Calu3 (cell line): ENCODE measurements at regions of chr2 and their contacts with region 1.

Region 1: GRCh38 chr2:217792626-217793527 is 209.9 kb downstream of the TNS1 start:
- DNase-seq: no peak
- H3K4me3 Mint-ChIP-seq: no peak overlapping the region
- H3K27ac Mint-ChIP-seq: no peak overlapping the region
- H3K4me1 Mint-ChIP-seq: no peaks in the 10 kb centered on the region
- H3K27me3 Mint-ChIP-seq: peaks cover 39% of the 10 kb centered on the region
- CTCF ChIP-seq: no peak

Region 2: GRCh38 chr2:217886720-217887309 is 93.9 kb after region 1 on chr2:
- CTCF ChIA-PET with region 1: interaction called, 16 read pairs
- intact Hi-C with region 1: loop called (anchors 1 kb)
- DNase-seq: peak; percentile 85
- H3K4me3 Mint-ChIP-seq: no peak overlapping the region
- H3K27ac Mint-ChIP-seq: no peak overlapping the region
- H3K4me1 Mint-ChIP-seq: no peaks in the 10 kb centered on the region
- H3K27me3 Mint-ChIP-seq: peaks cover 65% of the 10 kb centered on the region
- CTCF ChIP-seq: peak; percentile 75